ENCODE measurements at regions of chr4 and their contacts with region 1.

Region 1: DNA sequence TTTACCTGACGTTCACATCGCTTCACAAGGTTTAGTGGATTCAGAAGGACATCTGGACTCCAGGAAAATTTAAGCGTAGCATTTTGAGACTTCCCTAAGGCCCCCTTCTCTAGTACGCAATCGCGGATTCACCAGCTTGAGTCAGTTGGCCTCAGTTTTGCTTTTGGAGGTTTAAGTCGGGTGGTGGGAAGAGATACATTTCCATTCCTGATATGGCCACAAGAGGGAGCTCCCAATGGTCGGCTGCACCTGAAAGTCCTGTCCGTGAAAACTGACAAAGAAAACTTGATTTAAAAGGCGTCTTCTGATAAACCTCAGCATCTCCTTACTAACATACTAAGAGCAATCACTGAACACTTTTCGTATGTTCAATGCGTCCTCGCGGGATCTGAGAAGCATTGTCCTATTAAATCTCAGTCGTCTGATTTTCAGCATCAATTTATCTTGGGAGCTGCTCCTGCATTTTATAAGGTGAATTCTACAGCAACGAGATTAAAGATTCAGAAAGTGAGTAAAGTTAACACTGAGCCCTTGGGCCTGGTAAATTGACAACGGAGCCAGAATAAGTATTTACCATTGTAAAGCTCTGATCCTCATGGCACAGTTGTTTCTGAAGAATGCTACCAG is 50.6 kb downstream of the LGI2 start:
- DNase-seq: peak; percentile 90
- H3K4me3 ChIP-seq: peak overlapping the region in 2 of 3 experiments; percentile 2 to 53
- H3K27ac ChIP-seq: peak overlapping the region; percentile 91
- H3K4me1 ChIP-seq: peaks cover 17% of the 10 kb centered on the region
- H3K27me3 ChIP-seq: peaks cover 0 to 2% of the 10 kb centered on the region in 2 experiments
- CTCF ChIP-seq: peak; percentile 82 to 85
- POLR2A ChIP-seq: peak; percentile 8

Region 2: GRCh38 chr4:24584175-24584850 is 395.9 kb before region 1 on chr4 and contains the start of gene DHX15:
- CTCF ChIA-PET with region 1: interaction called, 13 read pairs
- POLR2A ChIA-PET with region 1: no interaction called
- dilution Hi-C with region 1: no loop called
- intact Hi-C with region 1: loop called (anchors 2 kb)
- DNase-seq: peak; percentile 97
- H3K4me3 ChIP-seq: peak within 1 kb of the TSS; percentile 82 to 97 (median 92)
- H3K27ac ChIP-seq: peak within 1 kb of the TSS; percentile 79
- H3K4me1 ChIP-seq: peaks cover 18% of the 10 kb centered on the region
- H3K27me3 ChIP-seq: no peaks in the 10 kb centered on the region
- CTCF ChIP-seq: no peak
- POLR2A ChIP-seq: peak; percentile 90
- total RNA-seq, gene DHX15: 148 and 152 TPM in 2 replicates

Region 3: DNA sequence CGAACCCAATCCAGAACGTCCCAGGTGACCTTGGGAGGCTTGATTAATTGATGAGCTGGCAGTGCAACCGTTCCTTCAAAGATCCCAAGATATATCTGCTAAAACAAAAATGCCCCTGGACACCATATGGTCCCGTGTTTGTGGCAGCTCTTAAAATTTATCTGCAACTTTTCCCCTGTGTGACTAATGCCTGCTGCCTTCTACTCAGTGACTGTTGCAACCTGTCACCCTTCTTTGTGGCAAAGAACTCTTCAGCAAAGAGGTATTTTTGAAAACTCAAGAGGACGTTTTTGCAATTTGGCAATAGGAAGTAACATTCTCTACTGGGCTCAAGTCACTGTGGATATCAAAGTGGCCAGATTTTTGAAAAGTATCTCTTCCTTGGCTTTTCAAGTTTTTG is 260.6 kb before region 1 on chr4:
- CTCF ChIA-PET with region 1: no interaction called
- POLR2A ChIA-PET with region 1: no interaction called
- dilution Hi-C with region 1: no loop called
- intact Hi-C with region 1: no loop called
- DNase-seq: no peak
- H3K4me3 ChIP-seq: no peak overlapping the region
- H3K27ac ChIP-seq: no peak overlapping the region
- H3K4me1 ChIP-seq: no peaks in the 10 kb centered on the region
- H3K27me3 ChIP-seq: no peaks in the 10 kb centered on the region
- CTCF ChIP-seq: no peak
- POLR2A ChIP-seq: no peak

Region 4: DNA sequence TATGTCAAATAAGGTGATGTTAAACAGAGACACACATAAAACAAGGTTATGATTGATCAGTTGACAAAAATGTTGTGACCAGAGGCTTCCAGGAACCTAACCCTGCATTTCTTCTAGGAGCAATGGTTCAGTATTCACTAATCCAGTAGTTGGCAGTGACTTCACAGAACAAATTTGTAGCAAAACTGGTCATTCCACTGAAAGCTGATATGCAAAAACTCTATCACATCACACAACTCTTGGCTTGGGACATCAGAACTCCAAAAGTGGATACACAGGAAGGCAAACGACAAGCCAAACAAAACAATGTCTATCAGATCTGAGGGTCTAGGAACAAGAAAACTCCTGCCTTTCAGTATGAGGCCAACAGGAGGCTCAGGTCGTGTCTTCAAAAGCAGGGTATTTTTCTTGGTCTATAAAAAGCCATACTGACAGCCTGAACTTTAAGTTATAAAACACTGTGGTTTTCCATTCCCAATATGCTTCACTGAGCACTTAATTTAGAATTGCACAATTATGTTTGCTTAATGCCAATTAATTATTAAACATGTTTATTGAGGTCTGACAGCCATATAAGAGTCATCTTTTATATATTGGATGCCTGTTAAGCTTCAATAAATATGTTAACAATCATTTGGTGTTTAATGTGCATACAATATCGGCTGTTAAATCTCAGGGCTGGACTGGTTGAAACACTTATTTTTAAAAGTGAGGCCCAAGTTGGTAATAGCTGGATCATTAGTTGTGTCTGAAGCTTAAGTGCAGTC is 139.2 kb before region 1 on chr4:
- CTCF ChIA-PET with region 1: interaction called, 8 read pairs
- POLR2A ChIA-PET with region 1: no interaction called
- dilution Hi-C with region 1: no loop called
- intact Hi-C with region 1: loop called (anchors 2 kb)
- DNase-seq: no peak
- H3K4me3 ChIP-seq: no peak overlapping the region
- H3K27ac ChIP-seq: no peak overlapping the region
- H3K4me1 ChIP-seq: peaks cover 15% of the 10 kb centered on the region
- H3K27me3 ChIP-seq: no peaks in the 10 kb centered on the region
- CTCF ChIP-seq: no peak
- POLR2A ChIP-seq: no peak

Region 5: GRCh38 chr4:24999392-25000089 is 19.4 kb after region 1 on chr4:
- CTCF ChIA-PET with region 1: interaction called, 114 read pairs
- POLR2A ChIA-PET with region 1: interaction called, 3 read pairs
- dilution Hi-C with region 1: no loop called
- intact Hi-C with region 1: loop called (anchors 1 kb)
- DNase-seq: no peak
- H3K4me3 ChIP-seq: no peak overlapping the region
- H3K27ac ChIP-seq: no peak overlapping the region
- H3K4me1 ChIP-seq: peaks cover 19% of the 10 kb centered on the region
- H3K27me3 ChIP-seq: no peaks in the 10 kb centered on the region
- CTCF ChIP-seq: no peak
- POLR2A ChIP-seq: no peak

Region 6: GRCh38 chr4:25051534-25051933 is 71.4 kb after region 1 on chr4:
- CTCF ChIA-PET with region 1: interaction called, 48 read pairs
- POLR2A ChIA-PET with region 1: no interaction called
- dilution Hi-C with region 1: no loop called
- intact Hi-C with region 1: no loop called
- DNase-seq: no peak
- H3K4me3 ChIP-seq: no peak overlapping the region
- H3K27ac ChIP-seq: no peak overlapping the region
- H3K4me1 ChIP-seq: no peaks in the 10 kb centered on the region
- H3K27me3 ChIP-seq: peaks cover 4 to 5% of the 10 kb centered on the region in 2 experiments
- CTCF ChIP-seq: no peak
- POLR2A ChIP-seq: no peak

Region 7: DNA sequence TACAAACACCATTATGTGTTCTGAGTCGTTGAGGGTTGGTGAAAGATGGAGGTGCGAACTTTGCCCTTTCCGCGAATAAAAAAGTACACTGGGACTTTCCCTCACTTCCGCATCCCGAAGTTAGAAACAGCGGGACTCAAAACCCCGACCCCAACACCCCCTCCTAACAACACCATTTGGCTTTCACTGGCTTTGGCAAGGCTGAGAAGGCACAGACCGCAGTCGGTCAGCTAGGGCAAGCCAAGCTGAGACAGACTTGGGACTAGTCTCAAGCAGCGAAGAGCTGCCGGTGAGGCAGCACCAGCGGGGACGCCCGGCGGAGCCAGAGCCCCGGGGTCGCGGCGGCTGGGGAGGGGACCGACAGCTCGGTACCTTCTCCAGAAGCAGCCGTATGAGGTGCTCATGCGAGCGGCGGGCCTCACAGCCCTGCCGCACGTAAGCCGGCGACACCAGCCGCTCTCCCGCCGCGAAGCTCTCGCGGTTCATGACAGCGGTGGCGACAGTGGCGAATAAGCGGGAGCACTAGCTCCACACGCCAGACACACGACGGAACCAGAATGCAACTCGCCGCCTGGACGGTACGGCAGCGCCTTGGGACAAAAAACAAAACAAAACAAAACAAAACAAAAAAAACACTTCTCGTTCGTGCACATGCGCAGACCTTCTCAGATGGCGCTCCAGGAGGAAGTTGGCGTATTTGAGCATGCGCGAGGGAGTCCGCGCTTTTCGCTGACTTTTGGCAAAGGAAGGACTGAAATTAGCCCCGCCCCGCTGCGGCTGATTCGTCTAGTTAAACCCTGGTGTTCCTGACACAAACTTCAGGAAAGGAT is 179.9 kb after region 1 on chr4 and contains the start of gene SEPSECS:
- CTCF ChIA-PET with region 1: interaction called, 9 read pairs
- POLR2A ChIA-PET with region 1: interaction called, 3 read pairs
- dilution Hi-C with region 1: no loop called
- intact Hi-C with region 1: loop called (anchors 1 kb)
- DNase-seq: peak; percentile 99
- H3K4me3 ChIP-seq: peak within 1 kb of the TSS; percentile 39 to 94 (median 84)
- H3K27ac ChIP-seq: peak within 1 kb of the TSS; percentile 81
- H3K4me1 ChIP-seq: peaks cover 7% of the 10 kb centered on the region
- H3K27me3 ChIP-seq: no peaks in the 10 kb centered on the region
- CTCF ChIP-seq: no peak
- POLR2A ChIP-seq: peak; percentile 87
- total RNA-seq, gene SEPSECS: 5.8 and 8.3 TPM in 2 replicates

Measured in endothelial cell of umbilical vein (primary cell).